ENCODE measurements at regions of chr1 and their contacts with region 1.

Region 1: DNA sequence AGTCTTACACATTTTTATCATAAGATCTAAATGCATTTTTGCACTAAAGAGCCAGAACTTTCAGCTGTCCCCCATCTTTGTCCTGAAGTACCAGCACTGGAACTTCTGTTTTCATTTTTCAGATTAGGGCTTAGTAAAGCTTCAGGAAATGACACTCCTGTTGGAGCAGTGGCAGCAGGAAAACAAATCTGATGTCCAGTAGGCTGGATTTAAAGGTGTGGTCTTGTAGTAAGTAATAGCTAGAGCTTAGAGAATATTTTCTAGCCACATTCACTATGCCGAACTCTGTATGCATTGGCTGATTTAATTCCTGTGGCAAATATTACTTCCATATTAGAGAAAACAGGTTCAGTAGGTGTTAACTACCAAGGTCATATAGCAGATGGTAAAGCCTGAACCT is 103.6 kb downstream of the PTBP2 start:
- DNase-seq: no peak
- ATAC-seq: no peak
- H3K4me3 ChIP-seq: no peak overlapping the region
- H3K27ac ChIP-seq: no peak overlapping the region
- H3K4me1 ChIP-seq: no peaks in the 10 kb centered on the region
- H3K27me3 ChIP-seq: no peaks in the 10 kb centered on the region
- CTCF ChIP-seq: no peak
- POLR2A ChIP-seq: no peak
- RAD21 ChIP-seq: no peak

Region 2: DNA sequence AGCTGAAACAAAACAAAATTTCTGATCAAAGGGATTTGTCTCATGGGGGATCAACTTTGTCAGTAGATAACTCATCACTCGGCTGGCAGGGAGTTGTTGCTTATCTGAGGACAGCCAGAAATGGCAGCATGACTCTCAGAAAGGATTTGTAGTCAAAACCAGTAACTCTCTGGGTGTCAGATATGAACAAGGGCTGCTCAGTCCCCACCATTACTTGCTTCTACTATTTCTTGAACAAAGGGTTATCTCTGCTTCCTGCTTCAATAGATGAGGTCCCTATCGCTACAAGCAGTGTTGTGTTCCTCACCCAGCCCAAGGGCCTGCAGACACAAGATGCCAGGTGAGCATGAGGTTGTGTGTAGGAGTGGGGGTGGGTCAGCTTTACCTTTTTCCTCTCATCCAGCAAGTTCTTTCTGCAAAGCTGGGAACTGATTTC is 12.6 kb after region 1 on chr1:
- CTCF ChIA-PET with region 1: no interaction called
- POLR2A ChIA-PET with region 1: no interaction called
- RAD21 ChIA-PET with region 1: no interaction called
- intact Hi-C with region 1: loop called (anchors 1 kb)
- DNase-seq: no peak
- ATAC-seq: no peak
- H3K4me3 ChIP-seq: no peak overlapping the region
- H3K27ac ChIP-seq: no peak overlapping the region
- H3K4me1 ChIP-seq: no peaks in the 10 kb centered on the region
- H3K27me3 ChIP-seq: no peaks in the 10 kb centered on the region
- CTCF ChIP-seq: no peak
- POLR2A ChIP-seq: no peak
- RAD21 ChIP-seq: no peak

Region 3: DNA sequence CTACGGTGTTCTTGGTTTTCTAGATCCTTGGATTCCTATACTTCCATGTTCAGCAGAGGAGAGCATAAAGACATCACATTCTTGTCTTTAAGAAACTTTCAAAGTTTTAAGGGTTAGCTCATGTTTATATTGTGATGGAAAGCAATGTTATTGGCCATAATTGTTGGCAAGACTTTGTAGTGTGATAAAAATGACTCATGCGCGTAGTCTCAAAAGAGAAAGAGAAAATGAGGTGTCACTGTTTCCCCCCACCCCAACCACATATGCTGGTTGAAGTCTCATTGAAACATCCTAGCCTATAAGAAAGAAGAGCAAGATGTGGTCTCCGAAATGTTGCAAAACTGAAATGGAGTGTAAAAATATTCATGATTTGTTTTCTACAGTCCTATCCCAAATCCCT is 245.1 kb after region 1 on chr1:
- CTCF ChIA-PET with region 1: no interaction called
- POLR2A ChIA-PET with region 1: no interaction called
- RAD21 ChIA-PET with region 1: no interaction called
- intact Hi-C with region 1: no loop called
- DNase-seq: no peak
- ATAC-seq: no peak
- H3K4me3 ChIP-seq: no peak overlapping the region
- H3K27ac ChIP-seq: no peak overlapping the region
- H3K4me1 ChIP-seq: no peaks in the 10 kb centered on the region
- H3K27me3 ChIP-seq: no peaks in the 10 kb centered on the region
- CTCF ChIP-seq: no peak
- POLR2A ChIP-seq: no peak
- RAD21 ChIP-seq: no peak